K562 (cell line): ENCODE measurements at regions of chr12 and their contacts with region 1.

Region 1: GRCh38 chr12:49031553-49032162 is 13.1 kb upstream of the PRKAG1 start:
- DNase-seq: no peak
- ATAC-seq: peak; percentile 43
- H3K4me3 ChIP-seq: no peak overlapping the region
- H3K27ac ChIP-seq: no peak overlapping the region
- H3K4me1 ChIP-seq: peaks cover 0 to 10% of the 10 kb centered on the region in 2 experiments; a peak in 1 of 5 replicates
- H3K27me3 ChIP-seq: no peaks in the 10 kb centered on the region
- CTCF ChIP-seq: no peak
- EP300 ChIP-seq: no peak
- POLR2A ChIP-seq: no peak
- RAD21 ChIP-seq: no peak

Region 2: DNA sequence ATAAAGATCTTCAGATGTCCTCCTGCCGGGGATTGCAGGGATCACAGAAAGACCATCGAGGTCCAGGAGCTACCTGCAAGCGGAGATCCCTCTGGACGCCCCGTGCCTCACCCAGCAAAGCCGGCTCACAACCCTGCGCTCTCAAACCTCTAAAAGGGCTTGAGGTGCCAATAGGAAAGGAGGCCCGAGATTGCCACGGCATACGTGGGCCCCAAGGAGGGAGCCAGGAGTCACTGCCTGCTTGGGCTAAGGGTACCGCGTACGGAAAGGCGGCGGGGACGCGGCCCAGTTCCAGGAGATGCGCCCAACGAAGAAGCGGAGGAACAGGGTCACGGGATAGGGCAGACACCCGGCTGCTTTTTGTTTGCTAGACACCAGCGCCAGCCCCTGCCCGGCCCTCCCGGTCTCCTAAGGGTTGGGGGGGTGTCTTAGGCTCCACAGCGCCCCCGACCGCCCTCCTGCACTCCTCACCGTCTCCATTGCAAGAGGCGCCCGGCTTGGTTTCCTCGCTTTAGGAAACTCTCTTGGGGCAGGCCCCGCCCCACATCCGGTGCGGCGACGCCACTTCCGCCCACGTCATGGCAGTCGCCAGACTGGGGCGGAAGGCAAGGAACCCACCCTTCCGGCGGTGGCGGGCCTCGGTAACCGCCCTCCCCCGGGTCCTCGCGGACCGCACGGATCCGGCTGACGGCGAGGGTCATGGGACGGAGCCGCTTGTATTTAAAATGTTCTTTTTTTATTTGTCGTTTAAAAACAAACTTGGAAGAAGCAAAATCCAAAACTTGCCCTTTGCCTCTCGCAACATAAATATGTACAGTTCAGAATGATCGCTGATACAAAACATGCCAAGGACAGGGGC is 13.2 kb before region 1 on chr12 and contains the start of gene PRKAG1:
- CTCF ChIA-PET with region 1: no interaction called
- POLR2A ChIA-PET with region 1: interaction called, 78 read pairs
- in situ Hi-C with region 1: no loop called
- intact Hi-C with region 1: no loop called
- DNase-seq: peak; percentile 96 to 99 (median 97)
- ATAC-seq: peak; percentile 89
- H3K4me3 ChIP-seq: peak within 1 kb of the TSS; percentile 69
- H3K27ac ChIP-seq: peak within 1 kb of the TSS; percentile 99
- H3K4me1 ChIP-seq: peaks cover 40 to 49% of the 10 kb centered on the region in 2 experiments
- H3K27me3 ChIP-seq: no peaks in the 10 kb centered on the region
- CTCF ChIP-seq: peak; percentile 76 to 85 (median 79)
- EP300 ChIP-seq: peak; percentile 68
- POLR2A ChIP-seq: peak; percentile 93
- RAD21 ChIP-seq: peak; percentile 26 to 27; a peak in 3 of 4 replicates
- polyA plus RNA-seq, gene PRKAG1: 82.7 to 126 TPM

Region 3: DNA sequence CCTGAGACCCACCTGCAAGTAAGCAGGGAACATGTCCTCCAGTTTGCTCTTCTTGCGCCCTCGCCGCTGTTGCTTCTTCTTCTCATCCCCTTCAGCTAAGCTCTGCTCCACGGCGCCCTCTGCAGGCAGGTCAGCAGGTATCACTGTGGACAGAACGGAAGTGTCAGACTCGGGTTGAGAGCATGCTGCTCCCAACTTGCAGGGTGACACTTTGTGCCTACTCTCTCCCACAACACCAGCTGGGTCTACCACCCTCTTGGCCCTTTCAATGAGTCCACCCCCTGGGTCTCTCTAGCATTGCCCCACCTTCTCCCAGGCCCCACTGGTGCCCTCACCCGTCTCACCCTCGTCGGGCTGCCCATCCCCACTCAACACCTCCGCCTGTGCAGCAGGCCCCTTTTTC is 12.2 kb after region 1 on chr12:
- CTCF ChIA-PET with region 1: no interaction called
- POLR2A ChIA-PET with region 1: interaction called, 19 read pairs
- in situ Hi-C with region 1: no loop called
- intact Hi-C with region 1: no loop called
- DNase-seq: peak; percentile 75 to 86 (median 80)
- ATAC-seq: peak; percentile 95
- H3K4me3 ChIP-seq: no peak overlapping the region
- H3K27ac ChIP-seq: no peak overlapping the region
- H3K4me1 ChIP-seq: no peaks in the 10 kb centered on the region
- H3K27me3 ChIP-seq: no peaks in the 10 kb centered on the region
- CTCF ChIP-seq: peak; percentile 79 to 94 (median 84)
- EP300 ChIP-seq: no peak
- POLR2A ChIP-seq: no peak
- RAD21 ChIP-seq: peak in 1 of 2 experiments; percentile 51; a peak in 2 of 4 replicates